Pancreas (tissue), 10 donors: ENCODE measurements at regions of chr11 and their contacts with region 1.

Region 1: GRCh38 chr11:78365381-78365792 is 52.2 kb downstream of the GAB2 start:
- DNase-seq: no peak
- ATAC-seq: peak in 3 of 4 donors; percentile 41 to 73 (median 64)
- H3K4me3 ChIP-seq: no peak overlapping the region
- H3K27ac ChIP-seq: no peak overlapping the region
- H3K4me1 ChIP-seq: peaks cover 0 to 8% (median 0%) of the 10 kb centered on the region in 3 donors
- H3K27me3 ChIP-seq: no peaks in the 10 kb centered on the region
- CTCF ChIP-seq: no peak

Region 2: DNA sequence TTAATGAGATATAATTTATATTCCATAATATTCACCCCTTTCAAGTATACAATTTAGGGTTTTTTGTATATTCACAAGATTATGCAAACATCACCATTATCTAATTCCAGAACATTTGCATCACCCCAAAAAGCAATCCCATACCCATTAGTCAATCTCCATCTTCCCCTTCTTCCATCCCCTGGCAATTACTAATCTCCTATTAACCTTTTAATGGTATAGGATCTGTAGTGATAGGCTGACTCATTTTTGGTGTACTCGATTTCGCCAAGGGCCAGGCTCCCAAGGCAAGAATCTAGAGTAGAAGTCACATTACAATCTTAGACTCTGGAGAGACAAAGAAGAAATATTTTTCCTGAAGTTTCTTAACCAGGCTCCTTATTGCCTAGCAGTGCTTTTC is 61.2 kb before region 1 on chr11:
- intact Hi-C with region 1: loop called in 1 of 3 experiments (anchors 10 kb)
- DNase-seq: no peak
- ATAC-seq: no peak
- H3K4me3 ChIP-seq: no peak overlapping the region
- H3K27ac ChIP-seq: no peak overlapping the region
- H3K4me1 ChIP-seq: peaks cover 0 to 4% (median 0%) of the 10 kb centered on the region in 3 donors
- H3K27me3 ChIP-seq: no peaks in the 10 kb centered on the region
- CTCF ChIP-seq: no peak

Region 3: DNA sequence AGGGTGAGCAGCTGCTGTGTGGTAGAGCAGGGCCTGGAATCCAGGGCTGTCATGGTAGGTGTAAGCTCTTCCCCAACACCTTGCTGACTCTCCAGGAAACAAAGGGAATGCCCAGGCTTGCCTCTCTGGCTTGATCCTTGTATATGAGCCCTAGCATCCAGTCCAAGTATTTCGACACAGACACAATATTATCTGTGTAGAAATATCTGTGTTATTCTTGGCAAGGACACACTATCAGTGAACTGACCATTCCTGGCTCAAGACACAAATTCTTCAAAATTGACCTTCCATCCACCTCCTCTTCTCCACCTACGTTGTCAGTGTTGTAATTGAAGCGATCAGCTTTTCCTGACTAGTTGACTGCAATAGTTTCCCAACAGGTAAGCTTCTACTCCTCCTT is 521.2 kb after region 1 on chr11:
- intact Hi-C with region 1: no loop called
- DNase-seq: no peak
- ATAC-seq: peak in 1 of 4 donors; percentile 52
- H3K4me3 ChIP-seq: no peak overlapping the region
- H3K27ac ChIP-seq: no peak overlapping the region
- H3K4me1 ChIP-seq: no peaks in the 10 kb centered on the region
- H3K27me3 ChIP-seq: no peaks in the 10 kb centered on the region
- CTCF ChIP-seq: no peak